PC-3 (cell line): ENCODE measurements at regions of chr10 and their contacts with region 1.

Region 1: GRCh38 chr10:99395750-99396445 is 34.5 kb downstream of the GOT1 start:
- DNase-seq: peak; percentile 91
- ATAC-seq: peak; percentile 84
- H3K4me3 ChIP-seq: peak overlapping the region; percentile 43; the same call in 1 of the 2 replicates
- H3K27ac ChIP-seq: peak overlapping the region; percentile 91
- H3K4me1 ChIP-seq: peaks cover 58% of the 10 kb centered on the region
- H3K27me3 ChIP-seq: no peaks in the 10 kb centered on the region
- CTCF ChIP-seq: no peak

Region 2: GRCh38 chr10:99328579-99329523 is 67.0 kb before region 1 on chr10 and contains the start of gene CNNM1:
- CTCF ChIA-PET with region 1: no interaction called
- POLR2A ChIA-PET with region 1: no interaction called
- intact Hi-C with region 1: loop called (anchors 1 kb)
- DNase-seq: peak; percentile 54
- ATAC-seq: peak; percentile 69
- H3K4me3 ChIP-seq: peak within 1 kb of the TSS; percentile 74
- H3K27ac ChIP-seq: no peak within 1 kb of the TSS
- H3K4me1 ChIP-seq: peaks cover 13% of the 10 kb centered on the region
- H3K27me3 ChIP-seq: no peaks in the 10 kb centered on the region
- CTCF ChIP-seq: peak; percentile 37; the same call in 1 of the 2 replicates
- total RNA-seq, gene CNNM1: 3.3 and 4.3 TPM in 2 replicates

Region 3: DNA sequence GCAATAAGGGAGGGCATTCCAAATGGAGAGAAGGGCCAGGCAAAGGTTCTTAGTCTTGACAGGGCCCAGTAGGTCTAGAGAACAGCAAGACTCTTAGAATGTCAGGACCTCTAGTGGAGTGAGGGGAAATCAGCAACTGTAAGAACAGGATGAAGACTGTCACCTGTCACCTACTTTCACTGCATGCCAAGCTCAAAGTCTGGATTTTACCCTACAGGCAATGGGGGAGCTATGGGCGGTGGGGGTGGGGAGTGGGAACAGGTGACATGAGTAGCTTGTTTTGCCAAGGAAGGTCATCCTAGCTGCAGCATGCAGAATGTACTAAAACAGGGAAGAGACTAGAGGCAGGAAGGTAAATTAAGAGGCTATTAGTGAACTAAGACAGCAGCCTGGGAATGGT is 16.2 kb after region 1 on chr10:
- CTCF ChIA-PET with region 1: interaction called, 7 read pairs
- POLR2A ChIA-PET with region 1: no interaction called
- intact Hi-C with region 1: loop called (anchors 2 kb)
- DNase-seq: peak; percentile 40
- ATAC-seq: peak; percentile 70; the same call in 1 of the 2 replicates
- H3K4me3 ChIP-seq: no peak overlapping the region
- H3K27ac ChIP-seq: no peak overlapping the region
- H3K4me1 ChIP-seq: peaks cover 5% of the 10 kb centered on the region; the same call in 1 of the 2 replicates
- H3K27me3 ChIP-seq: no peaks in the 10 kb centered on the region
- CTCF ChIP-seq: no peak; the same call in 1 of the 2 replicates

Region 4: GRCh38 chr10:99430451-99431189 is 34.7 kb after region 1 on chr10 and contains the start of gene GOT1:
- CTCF ChIA-PET with region 1: interaction called, 9 read pairs
- POLR2A ChIA-PET with region 1: no interaction called
- intact Hi-C with region 1: loop called (anchors 1 kb)
- DNase-seq: peak; percentile 98
- ATAC-seq: peak; percentile 96
- H3K4me3 ChIP-seq: peak within 1 kb of the TSS; percentile 98
- H3K27ac ChIP-seq: peak within 1 kb of the TSS; percentile 66
- H3K4me1 ChIP-seq: peaks cover 6% of the 10 kb centered on the region
- H3K27me3 ChIP-seq: no peaks in the 10 kb centered on the region
- CTCF ChIP-seq: no peak
- total RNA-seq, gene GOT1: 27.4 and 32.6 TPM in 2 replicates

Region 5: DNA sequence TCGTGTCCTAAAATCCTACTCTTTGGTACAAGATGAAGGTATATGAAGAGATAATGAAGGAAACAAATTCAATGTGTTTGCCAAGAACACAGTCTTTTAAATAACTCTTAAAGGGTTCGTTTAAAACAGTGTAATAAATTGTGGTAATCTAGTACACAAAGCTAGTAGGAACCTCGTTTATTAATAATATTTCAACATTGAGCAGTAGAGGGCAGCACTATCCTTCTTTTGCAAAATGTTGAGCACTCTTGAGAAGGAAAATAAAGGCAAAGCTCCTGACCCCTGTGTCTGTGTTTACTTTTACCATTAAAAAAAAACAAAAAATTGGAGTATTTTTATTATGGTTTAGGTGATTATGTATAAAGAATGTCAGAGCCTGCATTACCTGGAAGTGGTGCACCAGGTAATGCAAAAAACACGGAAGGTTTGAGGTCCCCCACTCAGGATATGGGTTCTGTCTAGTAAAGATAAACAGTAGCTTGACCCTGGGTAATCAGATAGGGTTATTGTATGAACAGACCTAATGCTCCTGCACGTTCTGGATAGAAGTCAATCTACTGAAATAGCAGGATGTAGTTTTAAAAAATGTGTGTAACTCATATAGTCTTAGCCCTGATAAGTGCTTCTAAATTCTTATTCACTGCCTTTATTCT is 40.2 kb after region 1 on chr10:
- CTCF ChIA-PET with region 1: interaction called, 9 read pairs
- POLR2A ChIA-PET with region 1: no interaction called
- intact Hi-C with region 1: loop called (anchors 1 kb)
- DNase-seq: peak; percentile 72
- ATAC-seq: peak; percentile 46; the same call in 1 of the 2 replicates
- H3K4me3 ChIP-seq: no peak overlapping the region
- H3K27ac ChIP-seq: no peak overlapping the region
- H3K4me1 ChIP-seq: no peaks in the 10 kb centered on the region
- H3K27me3 ChIP-seq: no peaks in the 10 kb centered on the region
- CTCF ChIP-seq: peak; percentile 65

Region 6: DNA sequence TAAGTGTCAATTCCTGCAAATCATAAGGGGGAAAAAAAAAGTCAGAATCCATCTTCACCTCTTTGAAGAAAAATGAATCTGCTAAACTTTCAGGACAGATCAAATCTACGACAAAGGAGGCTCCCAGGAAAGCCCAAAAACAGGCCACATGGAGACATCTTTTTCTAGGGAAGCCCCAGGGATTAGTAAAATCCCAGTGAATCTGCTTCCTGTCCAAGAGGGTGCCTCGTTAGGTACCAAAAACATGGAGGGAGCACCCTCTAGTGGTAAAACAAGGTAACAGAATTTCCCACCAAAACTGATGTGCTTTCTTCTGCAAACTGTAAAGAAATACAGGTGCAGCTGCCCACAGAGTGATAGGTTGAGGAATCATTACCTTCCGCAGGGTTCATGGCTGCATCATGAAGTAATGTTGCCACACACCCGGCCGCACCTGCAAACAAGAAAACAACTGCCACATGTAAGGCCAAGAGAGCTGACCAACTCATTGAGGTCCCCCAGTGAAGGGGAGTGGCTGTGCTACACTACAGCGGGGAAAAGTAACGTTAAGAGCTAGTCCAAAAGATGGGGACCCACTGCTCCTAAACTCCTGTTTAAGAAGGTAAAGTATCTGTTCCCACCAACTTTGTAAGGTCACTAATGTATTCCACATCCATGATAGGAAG is 216.4 kb after region 1 on chr10:
- CTCF ChIA-PET with region 1: no interaction called
- POLR2A ChIA-PET with region 1: no interaction called
- intact Hi-C with region 1: loop called (anchors 1 kb)
- DNase-seq: peak; percentile 78
- ATAC-seq: peak; percentile 67
- H3K4me3 ChIP-seq: no peak overlapping the region
- H3K27ac ChIP-seq: no peak overlapping the region
- H3K4me1 ChIP-seq: peaks cover 5% of the 10 kb centered on the region; the same call in 1 of the 2 replicates
- H3K27me3 ChIP-seq: no peaks in the 10 kb centered on the region
- CTCF ChIP-seq: peak; percentile 78